Motor neuron (in vitro differentiated cells): ENCODE measurements at regions of chr2 and their contacts with region 1.

Region 1: DNA sequence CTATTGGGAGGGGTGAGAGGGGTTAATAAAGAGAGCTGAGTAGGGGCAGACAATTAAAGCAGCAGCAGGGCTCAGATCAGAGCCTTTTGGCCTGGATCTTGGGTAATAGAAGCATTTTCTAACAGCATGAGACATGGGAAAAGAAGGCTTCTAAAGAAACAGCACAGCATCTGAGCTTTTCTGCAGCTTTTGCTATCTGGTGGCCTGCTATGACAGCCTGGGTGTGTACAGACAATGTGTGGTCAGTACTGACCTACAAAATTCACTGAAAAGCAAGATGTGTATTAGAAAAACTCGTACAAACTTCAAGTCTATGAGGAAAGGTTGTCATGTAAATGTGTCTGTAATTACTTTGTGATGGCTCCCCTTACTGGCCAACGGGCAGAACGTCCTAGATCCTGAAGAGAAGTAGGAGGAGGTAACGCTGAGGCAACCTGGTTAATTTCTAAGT is 95.6 kb downstream of the GALNT3 start:
- ATAC-seq: peak; percentile 71 to 88 (median 78)
- H3K4me3 ChIP-seq: no peak overlapping the region
- H3K27ac ChIP-seq: no peak overlapping the region
- H3K4me1 ChIP-seq: peaks cover 14 to 23% of the 10 kb centered on the region in 2 donors

Region 2: GRCh38 chr2:165401285-165401852 is 297.1 kb before region 1 on chr2:
- in situ Hi-C with region 1: loop called in 3 of 9 experiments (anchors 10 to 25 kb)
- ATAC-seq: peak in 3 of 8 experiments; percentile 37 to 70 (median 55)
- H3K4me3 ChIP-seq: no peak overlapping the region
- H3K27ac ChIP-seq: no peak overlapping the region
- H3K4me1 ChIP-seq: peaks cover 0 to 3% of the 10 kb centered on the region in 2 donors

Region 3: GRCh38 chr2:165505514-165505913 is 193.0 kb before region 1 on chr2:
- in situ Hi-C with region 1: no loop called
- ATAC-seq: no peak
- H3K4me3 ChIP-seq: no peak overlapping the region
- H3K27ac ChIP-seq: no peak overlapping the region
- H3K4me1 ChIP-seq: no peaks in the 10 kb centered on the region

Region 4: GRCh38 chr2:166125557-166125956 is 427.1 kb after region 1 on chr2:
- in situ Hi-C with region 1: no loop called
- ATAC-seq: peak in 7 of 8 experiments; percentile 15 to 90 (median 50)
- H3K4me3 ChIP-seq: peak overlapping the region in 1 of 5 donors; percentile 23
- H3K27ac ChIP-seq: no peak overlapping the region
- H3K4me1 ChIP-seq: peaks cover 11 to 21% of the 10 kb centered on the region in 2 donors